Caco-2 (cell line): ENCODE measurements at regions of chr10 and their contacts with region 1.

Region 1: GRCh38 chr10:63819753-63820329 is 298.6 kb downstream of the REEP3 start:
- DNase-seq: peak; percentile 74 to 84
- H3K4me3 ChIP-seq: no peak overlapping the region
- H3K4me3 Mint-ChIP-seq: no peak overlapping the region
- H3K27ac Mint-ChIP-seq: no peak overlapping the region
- H3K4me1 ChIP-seq: no peaks in the 10 kb centered on the region
- H3K4me1 Mint-ChIP-seq: no peaks in the 10 kb centered on the region
- H3K27me3 ChIP-seq: no peaks in the 10 kb centered on the region
- H3K27me3 Mint-ChIP-seq: peaks cover 7% of the 10 kb centered on the region
- CTCF ChIP-seq: peak; percentile 95 to 98

Region 2: GRCh38 chr10:63166742-63167258 is 653.0 kb before region 1 on chr10:
- CTCF ChIA-PET with region 1: interaction called, 4 read pairs
- POLR2A ChIA-PET with region 1: no interaction called
- intact Hi-C with region 1: loop called (anchors 2 kb)
- DNase-seq: peak in 1 of 2 experiments; percentile 80
- H3K4me3 ChIP-seq: no peak overlapping the region
- H3K4me3 Mint-ChIP-seq: no peak overlapping the region
- H3K27ac Mint-ChIP-seq: no peak overlapping the region
- H3K4me1 ChIP-seq: no peaks in the 10 kb centered on the region
- H3K4me1 Mint-ChIP-seq: peaks cover 6% of the 10 kb centered on the region
- H3K27me3 ChIP-seq: no peaks in the 10 kb centered on the region
- H3K27me3 Mint-ChIP-seq: no peaks in the 10 kb centered on the region
- CTCF ChIP-seq: peak; percentile 92 to 94

Region 3: DNA sequence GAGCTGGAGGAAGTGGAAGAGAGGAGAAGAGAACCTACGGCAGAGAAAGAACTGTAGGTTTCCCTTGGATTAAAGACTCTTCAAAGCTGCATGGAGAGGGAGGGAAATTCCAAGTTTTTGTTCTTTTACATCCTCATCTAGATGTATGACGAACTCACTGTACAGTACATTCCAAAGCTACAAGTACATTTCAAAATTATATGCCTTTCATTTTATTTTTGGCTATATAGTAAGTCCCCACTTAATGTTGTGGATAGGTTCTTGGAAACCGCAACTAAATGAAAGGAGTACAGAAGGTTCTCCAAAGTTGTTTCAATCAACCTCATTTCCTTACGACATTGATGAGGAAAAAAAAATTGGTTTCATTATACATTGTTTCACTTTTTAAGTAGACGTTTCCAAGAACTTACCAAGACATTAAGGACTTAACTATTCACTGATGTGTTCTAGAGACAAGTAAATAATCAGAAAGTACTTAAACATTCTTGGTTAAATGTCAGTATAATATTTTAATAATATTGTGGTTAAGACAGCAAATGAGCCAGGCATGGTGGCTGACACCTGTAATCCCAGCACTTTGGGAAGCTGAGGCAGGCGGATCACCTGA is 337.9 kb before region 1 on chr10:
- CTCF ChIA-PET with region 1: no interaction called
- POLR2A ChIA-PET with region 1: no interaction called
- intact Hi-C with region 1: no loop called
- DNase-seq: no peak
- H3K4me3 ChIP-seq: no peak overlapping the region
- H3K4me3 Mint-ChIP-seq: no peak overlapping the region
- H3K27ac Mint-ChIP-seq: no peak overlapping the region
- H3K4me1 ChIP-seq: peaks cover 8% of the 10 kb centered on the region
- H3K4me1 Mint-ChIP-seq: peaks cover 15% of the 10 kb centered on the region
- H3K27me3 ChIP-seq: no peaks in the 10 kb centered on the region
- H3K27me3 Mint-ChIP-seq: no peaks in the 10 kb centered on the region
- CTCF ChIP-seq: no peak